CD8-positive, alpha-beta memory T cell (primary cell): ENCODE measurements at regions of chr1 and their contacts with region 1.

Region 1: DNA sequence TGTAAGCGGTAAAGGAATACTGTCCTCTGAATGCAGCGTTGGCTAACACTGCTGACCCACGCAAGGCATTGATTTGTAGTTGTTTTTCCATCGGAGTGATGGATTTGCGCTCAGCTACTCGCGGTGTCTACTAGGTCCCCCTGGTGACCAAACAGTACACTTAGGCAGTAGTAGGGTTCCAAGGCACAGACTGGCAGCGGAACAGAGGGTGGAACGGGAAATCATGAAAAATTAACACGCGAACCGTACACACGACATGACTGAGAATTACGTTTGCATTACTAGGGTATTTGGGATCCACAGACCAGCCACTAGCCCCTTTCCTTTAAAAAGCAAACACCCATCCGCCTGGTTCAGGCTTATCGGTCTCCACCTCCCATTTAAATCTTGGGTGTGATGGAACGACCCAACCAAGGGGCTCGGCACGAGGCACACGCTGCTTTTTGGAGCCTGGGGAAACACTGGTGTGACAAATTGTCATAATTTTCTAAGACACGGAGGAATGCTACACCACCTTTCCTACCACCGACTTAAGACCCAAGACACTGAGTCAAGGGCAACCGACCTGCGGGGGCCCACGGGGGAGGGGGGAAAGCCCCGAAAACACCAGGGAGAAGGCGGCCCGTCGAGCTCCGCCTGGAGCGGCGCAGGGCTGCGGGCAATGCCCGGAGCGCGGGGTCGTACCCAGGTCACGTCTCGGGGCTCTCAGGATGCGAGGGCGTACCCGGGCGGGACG is 699 bp downstream of the DIPK1A start:
- DNase-seq: peak; percentile 26 to 78 (median 72)
- H3K4me3 ChIP-seq: peak overlapping the region; percentile 93
- H3K4me3 Mint-ChIP-seq: peak overlapping the region in 6 of 7 donors; percentile 88 to 96 (median 91)
- H3K27ac ChIP-seq: peak overlapping the region; percentile 86
- H3K27ac Mint-ChIP-seq: peak overlapping the region; percentile 90 to 99 (median 96)
- H3K4me1 ChIP-seq: peaks cover 74% of the 10 kb centered on the region
- H3K4me1 Mint-ChIP-seq: peaks cover 43% of the 10 kb centered on the region in 3 donors
- H3K27me3 ChIP-seq: no peaks in the 10 kb centered on the region
- H3K27me3 Mint-ChIP-seq: peaks cover 0 to 3% of the 10 kb centered on the region in 2 donors

Region 2: GRCh38 chr1:92837062-92837461 is 123.5 kb before region 1 on chr1:
- CTCF ChIA-PET with region 1: interaction called, 27 read pairs
- POLR2A ChIA-PET with region 1: interaction called, 40 read pairs
- DNase-seq: no peak
- H3K4me3 ChIP-seq: no peak overlapping the region
- H3K4me3 Mint-ChIP-seq: peak overlapping the region in 3 of 7 donors; percentile 4 to 26 (median 26)
- H3K27ac ChIP-seq: no peak overlapping the region
- H3K27ac Mint-ChIP-seq: peak overlapping the region in 7 of 8 donors; percentile 41 to 98 (median 88)
- H3K4me1 ChIP-seq: peaks cover 72% of the 10 kb centered on the region
- H3K4me1 Mint-ChIP-seq: peaks cover 83 to 92% (median 89%) of the 10 kb centered on the region in 3 donors
- H3K27me3 ChIP-seq: no peaks in the 10 kb centered on the region
- H3K27me3 Mint-ChIP-seq: no peaks in the 10 kb centered on the region

Region 3: DNA sequence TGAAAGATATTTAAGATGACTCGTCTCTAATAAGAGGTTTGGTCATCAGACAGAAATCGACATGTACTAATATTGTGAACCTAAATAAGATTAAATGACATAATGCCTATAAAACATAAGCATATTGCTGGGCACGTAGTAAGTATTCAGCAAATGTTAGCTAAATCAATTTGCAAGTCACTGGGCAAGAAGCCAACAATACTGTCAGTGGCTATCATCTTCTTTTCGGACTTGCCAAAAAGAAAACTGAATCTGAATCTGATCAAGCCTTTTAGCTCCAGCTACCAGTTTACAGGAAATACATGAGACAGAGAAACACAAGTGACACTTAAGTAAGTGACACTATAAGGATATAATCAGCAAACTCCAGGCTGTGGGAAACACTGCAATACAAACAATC is 82.8 kb before region 1 on chr1:
- CTCF ChIA-PET with region 1: interaction called, 23 read pairs
- POLR2A ChIA-PET with region 1: interaction called, 6 read pairs
- DNase-seq: peak in 1 of 5 donors; percentile 10
- H3K4me3 ChIP-seq: peak overlapping the region; percentile 33
- H3K4me3 Mint-ChIP-seq: peak overlapping the region; percentile 14 to 82 (median 66)
- H3K27ac ChIP-seq: no peak overlapping the region
- H3K27ac Mint-ChIP-seq: peak overlapping the region in 7 of 8 donors; percentile 39 to 91 (median 78)
- H3K4me1 ChIP-seq: peaks cover 28% of the 10 kb centered on the region
- H3K4me1 Mint-ChIP-seq: peaks cover 34 to 37% (median 34%) of the 10 kb centered on the region in 3 donors
- H3K27me3 ChIP-seq: no peaks in the 10 kb centered on the region
- H3K27me3 Mint-ChIP-seq: no peaks in the 10 kb centered on the region

Region 4: DNA sequence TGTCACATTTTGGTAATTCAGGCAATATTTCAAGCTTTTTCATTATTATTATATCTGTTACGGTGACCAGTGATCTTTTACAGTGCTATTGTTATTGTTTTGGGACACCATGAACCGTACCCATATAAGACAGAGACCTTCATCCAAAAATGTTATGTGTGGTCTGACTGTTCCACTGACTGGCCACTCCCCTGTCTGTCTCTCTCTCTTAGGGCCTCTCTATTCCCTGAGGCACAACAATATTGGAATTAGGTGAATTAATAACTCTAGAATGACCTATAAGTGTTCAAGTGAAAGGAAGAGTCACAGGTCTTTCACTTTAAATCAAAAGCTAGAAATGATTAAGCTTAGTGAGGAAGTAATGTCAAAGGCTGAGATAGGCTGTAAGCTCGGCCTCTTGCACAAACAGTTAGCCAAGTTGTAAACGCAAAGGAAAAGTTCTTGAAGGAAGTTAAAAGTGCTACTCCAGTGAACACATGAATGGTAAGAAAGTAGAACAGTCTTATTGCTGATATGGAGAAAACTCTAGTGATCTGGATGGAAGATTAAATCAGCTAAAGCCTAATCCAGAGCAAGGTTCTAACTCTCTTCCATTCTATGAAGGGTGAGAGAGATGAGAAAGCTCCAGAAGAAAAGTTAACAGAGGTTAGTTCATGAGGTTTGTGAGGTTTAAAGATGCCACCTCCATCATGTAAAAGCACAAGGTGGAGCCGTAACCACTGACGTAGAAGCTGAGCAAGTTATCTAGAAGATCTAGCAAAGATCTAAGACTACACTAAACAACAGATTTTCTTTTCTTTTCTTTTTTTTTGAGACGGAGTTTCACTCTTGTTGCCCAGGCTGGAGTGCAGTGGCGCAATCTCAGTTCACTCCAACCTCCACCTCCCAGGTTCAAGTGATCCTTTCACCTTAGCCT is 20.4 kb after region 1 on chr1:
- CTCF ChIA-PET with region 1: interaction called, 37 read pairs
- POLR2A ChIA-PET with region 1: interaction called, 32 read pairs
- DNase-seq: peak; percentile 9 to 86 (median 82)
- H3K4me3 ChIP-seq: peak overlapping the region; percentile 2
- H3K4me3 Mint-ChIP-seq: peak overlapping the region; percentile 4 to 77 (median 68)
- H3K27ac ChIP-seq: peak overlapping the region; percentile 32
- H3K27ac Mint-ChIP-seq: peak overlapping the region; percentile 88 to 99 (median 96)
- H3K4me1 ChIP-seq: peaks cover 27% of the 10 kb centered on the region
- H3K4me1 Mint-ChIP-seq: peaks cover 22 to 50% (median 39%) of the 10 kb centered on the region in 3 donors
- H3K27me3 ChIP-seq: no peaks in the 10 kb centered on the region
- H3K27me3 Mint-ChIP-seq: no peaks in the 10 kb centered on the region

Region 5: GRCh38 chr1:93078986-93079654 is 118.6 kb after region 1 on chr1 and contains the start of gene MTF2:
- CTCF ChIA-PET with region 1: interaction called, 6 read pairs
- POLR2A ChIA-PET with region 1: interaction called, 15 read pairs
- DNase-seq: peak; percentile 85 to 94 (median 89)
- H3K4me3 ChIP-seq: peak within 1 kb of the TSS; percentile 96
- H3K4me3 Mint-ChIP-seq: peak within 1 kb of the TSS; percentile 86 to 98 (median 94)
- H3K27ac ChIP-seq: peak within 1 kb of the TSS; percentile 84
- H3K27ac Mint-ChIP-seq: peak within 1 kb of the TSS; percentile 91 to 99 (median 94)
- H3K4me1 ChIP-seq: peaks cover 42% of the 10 kb centered on the region
- H3K4me1 Mint-ChIP-seq: peaks cover 46 to 63% (median 62%) of the 10 kb centered on the region in 3 donors
- H3K27me3 ChIP-seq: no peaks in the 10 kb centered on the region
- H3K27me3 Mint-ChIP-seq: no peaks in the 10 kb centered on the region
- total RNA-seq, gene MTF2: 42.1 to 43.4 TPM

Region 6: DNA sequence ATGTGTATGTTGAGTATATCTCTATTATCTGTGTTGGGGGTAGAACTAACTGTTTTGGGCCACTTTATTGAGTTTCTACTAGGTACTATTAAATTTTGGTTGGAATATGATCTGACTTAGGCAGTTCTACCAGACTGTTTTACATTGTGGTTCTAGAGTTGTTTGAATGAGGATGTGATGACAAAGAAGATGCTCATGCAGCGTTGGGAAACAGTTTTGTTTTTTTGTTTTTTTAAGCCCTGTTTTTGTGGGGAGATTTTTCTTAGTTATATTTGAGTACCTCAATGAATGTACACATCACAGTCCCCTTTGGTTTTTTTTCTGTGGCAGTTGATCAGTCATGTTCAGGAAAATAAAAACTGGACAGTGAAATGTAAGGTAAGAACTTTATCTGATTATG is 179.5 kb after region 1 on chr1:
- CTCF ChIA-PET with region 1: no interaction called
- POLR2A ChIA-PET with region 1: no interaction called
- DNase-seq: no peak
- H3K4me3 ChIP-seq: no peak overlapping the region
- H3K4me3 Mint-ChIP-seq: no peak overlapping the region
- H3K27ac ChIP-seq: no peak overlapping the region
- H3K27ac Mint-ChIP-seq: peak overlapping the region in 3 of 8 donors; percentile 8 to 65 (median 30)
- H3K4me1 ChIP-seq: no peaks in the 10 kb centered on the region
- H3K4me1 Mint-ChIP-seq: peaks cover 0 to 7% (median 4%) of the 10 kb centered on the region in 3 donors
- H3K27me3 ChIP-seq: no peaks in the 10 kb centered on the region
- H3K27me3 Mint-ChIP-seq: no peaks in the 10 kb centered on the region